ENCODE measurements at regions of chr13 and their contacts with region 1.

Region 1: GRCh38 chr13:33825083-33825482 is 7.1 kb downstream of the RFC3 start:
- DNase-seq: no peak

Region 2: DNA sequence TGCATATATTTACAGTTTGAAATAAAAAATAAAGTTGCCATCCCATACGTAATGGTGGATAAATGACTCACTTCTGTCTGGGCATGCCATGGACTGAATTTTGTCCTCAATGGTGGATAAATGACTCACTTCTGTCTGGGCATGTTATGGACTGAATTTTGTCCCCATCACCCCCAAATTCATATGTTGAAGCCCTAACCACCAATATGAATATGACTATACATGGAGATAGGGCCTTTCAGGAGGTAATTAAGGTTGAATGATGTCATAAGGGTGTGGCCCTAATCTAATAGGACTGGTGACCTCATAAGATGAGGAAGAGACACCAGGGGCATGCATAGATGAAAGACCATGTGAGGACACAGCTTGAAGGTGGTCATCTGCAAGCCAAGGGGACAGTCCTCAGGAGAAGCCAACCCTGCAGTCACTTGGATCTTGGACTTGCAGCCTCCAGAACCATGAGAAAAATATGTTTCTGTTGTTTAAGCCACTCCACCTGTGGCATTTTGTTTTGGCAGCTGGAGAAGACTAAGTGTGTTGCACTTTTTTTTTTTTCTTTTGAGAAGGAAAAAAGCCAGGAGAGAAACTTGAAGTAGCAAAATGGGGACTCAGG is 34.7 kb after region 1 on chr13:
- intact Hi-C with region 1: loop called in 1 of 2 experiments (anchors 2 kb)
- DNase-seq: no peak